Aorta (tissue), 5 donors: ENCODE measurements at regions of chr11 and their contacts with region 1.

Region 1: DNA sequence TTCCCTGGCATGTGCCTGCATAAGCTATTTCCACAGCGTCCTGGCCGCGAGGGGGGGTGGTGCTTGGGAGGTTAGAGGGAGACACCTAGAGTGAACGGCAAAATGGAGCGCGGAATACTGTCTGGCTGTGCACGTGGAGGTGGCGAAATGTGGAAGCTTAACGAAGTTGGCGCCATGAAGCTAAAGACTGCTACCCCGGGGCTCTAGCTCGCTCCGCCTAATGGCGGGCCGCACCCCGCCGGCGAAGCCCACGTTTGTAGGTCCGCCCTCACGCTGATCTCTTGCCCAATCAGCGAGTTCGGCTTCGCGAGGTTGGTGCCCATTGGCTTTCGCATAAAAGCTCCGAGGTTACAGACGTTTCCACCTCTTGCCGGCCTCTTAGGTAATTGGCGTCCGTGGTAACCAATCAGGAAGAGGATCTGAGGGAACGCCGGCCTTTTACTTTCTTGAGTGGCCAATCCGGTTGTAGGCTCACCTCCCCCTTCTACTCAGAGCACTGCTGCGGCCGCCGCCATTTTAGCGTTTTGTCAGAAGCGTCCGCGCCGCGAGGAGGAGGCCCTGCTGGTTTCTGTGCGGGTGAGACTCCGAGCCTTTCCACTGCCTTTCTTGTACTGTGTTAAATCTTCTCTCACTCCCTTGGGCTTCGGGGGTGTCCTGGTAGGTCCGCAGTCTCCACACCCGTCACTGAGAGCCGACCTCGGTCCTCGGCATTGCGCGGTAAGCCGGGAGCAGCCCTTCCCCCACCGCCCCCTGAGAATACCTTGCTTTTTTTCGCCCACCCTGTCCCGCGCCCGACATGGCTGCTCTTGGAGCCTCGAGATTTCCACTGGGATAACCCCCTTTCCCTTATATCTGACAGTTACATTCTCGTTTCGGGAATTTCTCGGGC is at the start of gene RBM4:
- DNase-seq: peak; percentile 97 to 98
- ATAC-seq: peak; percentile 99
- H3K4me3 ChIP-seq: peak within 1 kb of the TSS; percentile 46 to 87
- H3K27ac ChIP-seq: peak within 1 kb of the TSS; percentile 5 to 54
- H3K4me1 ChIP-seq: peaks cover 0 to 6% of the 10 kb centered on the region in 2 donors
- H3K27me3 ChIP-seq: no peaks in the 10 kb centered on the region
- total RNA-seq, gene RBM4: 86.9 to 98.1 TPM

Region 2: GRCh38 chr11:66467028-66467659 is 171.3 kb before region 1 on chr11:
- intact Hi-C with region 1: no loop called
- DNase-seq: peak; percentile 65 to 82
- ATAC-seq: no peak
- H3K4me3 ChIP-seq: peak overlapping the region; percentile 70 to 78
- H3K27ac ChIP-seq: no peak overlapping the region
- H3K4me1 ChIP-seq: no peaks in the 10 kb centered on the region
- H3K27me3 ChIP-seq: no peaks in the 10 kb centered on the region

Region 3: DNA sequence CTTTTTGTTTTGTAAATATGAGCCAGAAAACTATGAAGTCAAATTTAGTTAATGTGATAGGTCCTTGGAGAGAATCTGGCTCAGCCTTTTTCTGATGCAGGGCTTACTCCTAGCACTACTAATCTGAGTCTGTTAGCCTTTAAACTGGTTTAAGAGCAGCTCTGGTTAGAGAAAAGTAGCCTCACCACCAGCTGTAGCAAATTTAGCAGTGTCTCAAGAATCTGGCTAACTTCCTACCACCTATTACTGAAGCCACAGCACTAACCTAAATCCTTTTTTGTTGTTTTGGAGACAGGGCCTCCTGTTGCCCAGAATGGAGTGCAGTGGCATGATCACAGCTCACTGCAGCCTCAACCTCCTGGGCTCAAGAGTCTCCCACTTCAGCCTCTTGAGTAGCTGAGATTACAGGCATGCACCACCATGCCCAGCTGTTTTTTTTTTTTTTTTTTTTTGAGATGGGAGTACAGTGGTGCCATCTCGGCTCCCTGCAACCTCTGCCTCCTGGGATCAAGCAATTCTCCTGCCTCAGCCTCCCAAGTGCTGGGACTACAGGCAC is 25.4 kb after region 1 on chr11:
- intact Hi-C with region 1: loop called in 1 of 2 experiments (anchors 2 kb)
- DNase-seq: no peak
- ATAC-seq: no peak
- H3K4me3 ChIP-seq: no peak overlapping the region
- H3K27ac ChIP-seq: no peak overlapping the region
- H3K4me1 ChIP-seq: no peaks in the 10 kb centered on the region
- H3K27me3 ChIP-seq: no peaks in the 10 kb centered on the region

Region 4: DNA sequence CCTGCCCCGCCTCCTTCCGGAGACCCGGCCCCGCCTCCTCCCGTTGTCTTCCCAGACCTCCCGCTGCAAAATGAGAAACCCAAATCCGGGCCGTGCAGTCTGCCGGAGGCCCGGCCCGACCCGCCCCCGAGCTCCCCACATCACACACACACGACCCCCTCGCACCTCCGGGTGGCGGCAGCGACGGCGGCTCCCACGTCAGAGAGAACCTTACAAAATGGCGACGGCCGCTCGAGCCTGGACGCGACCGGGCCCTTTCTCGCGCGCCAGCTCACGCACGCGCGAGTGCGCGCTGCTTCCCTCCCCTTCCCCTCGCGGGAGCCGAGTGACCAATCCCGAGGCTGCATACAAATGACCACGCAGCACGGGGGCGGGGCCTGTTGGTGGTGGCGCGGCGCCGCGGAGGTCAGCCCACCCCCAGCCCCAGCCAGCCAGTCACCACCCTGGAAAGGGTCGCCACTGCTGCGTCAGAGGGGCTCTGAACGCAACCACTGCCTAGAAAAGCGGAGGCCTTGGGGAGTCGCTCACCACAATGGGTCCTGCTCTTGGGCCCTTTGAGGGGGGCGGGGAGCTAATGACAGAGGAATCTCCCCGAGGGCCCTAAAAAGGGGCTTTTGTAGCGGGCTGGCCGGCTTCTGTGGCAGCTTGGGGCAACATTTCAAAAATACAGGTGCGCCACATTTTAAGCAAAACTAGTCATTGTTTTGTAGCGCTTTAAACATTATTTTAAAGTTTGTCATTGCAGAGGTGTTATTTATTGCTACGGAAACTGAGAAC is 39.4 kb after region 1 on chr11 and contains the start of gene RBM4B:
- intact Hi-C with region 1: loop called in 1 of 2 experiments (anchors 5 kb)
- DNase-seq: peak; percentile 98 to 99
- ATAC-seq: peak; percentile 99
- H3K4me3 ChIP-seq: peak within 1 kb of the TSS; percentile 61 to 63
- H3K27ac ChIP-seq: peak within 1 kb of the TSS; percentile 78 to 95
- H3K4me1 ChIP-seq: no peaks in the 10 kb centered on the region
- H3K27me3 ChIP-seq: no peaks in the 10 kb centered on the region
- total RNA-seq, gene RBM4B: 9.2 to 16.5 TPM